ENCODE measurements at regions of chr14 and their contacts with region 1.

Region 1: GRCh38 chr14:21367582-21368144 is 16.2 kb downstream of the SUPT16H start:
- DNase-seq: no peak
- ATAC-seq: no peak
- H3K4me3 ChIP-seq: no peak overlapping the region
- H3K27ac ChIP-seq: no peak overlapping the region
- H3K4me1 ChIP-seq: no peaks in the 10 kb centered on the region
- H3K27me3 ChIP-seq: no peaks in the 10 kb centered on the region
- CTCF ChIP-seq: no peak

Region 2: GRCh38 chr14:21229821-21230220 is 137.8 kb before region 1 on chr14:
- intact Hi-C with region 1: no loop called
- DNase-seq: no peak
- ATAC-seq: peak in 1 of 4 donors; percentile 8
- H3K4me3 ChIP-seq: no peak overlapping the region
- H3K27ac ChIP-seq: no peak overlapping the region
- H3K4me1 ChIP-seq: peaks cover 0 to 32% (median 6%) of the 10 kb centered on the region in 3 donors
- H3K27me3 ChIP-seq: no peaks in the 10 kb centered on the region
- CTCF ChIP-seq: no peak

Region 3: GRCh38 chr14:21414137-21414631 is 46.5 kb after region 1 on chr14:
- intact Hi-C with region 1: loop called in 1 of 3 experiments (anchors 10 kb)
- DNase-seq: no peak
- ATAC-seq: no peak
- H3K4me3 ChIP-seq: no peak overlapping the region
- H3K27ac ChIP-seq: no peak overlapping the region
- H3K4me1 ChIP-seq: no peaks in the 10 kb centered on the region
- H3K27me3 ChIP-seq: no peaks in the 10 kb centered on the region
- CTCF ChIP-seq: no peak

Region 4: DNA sequence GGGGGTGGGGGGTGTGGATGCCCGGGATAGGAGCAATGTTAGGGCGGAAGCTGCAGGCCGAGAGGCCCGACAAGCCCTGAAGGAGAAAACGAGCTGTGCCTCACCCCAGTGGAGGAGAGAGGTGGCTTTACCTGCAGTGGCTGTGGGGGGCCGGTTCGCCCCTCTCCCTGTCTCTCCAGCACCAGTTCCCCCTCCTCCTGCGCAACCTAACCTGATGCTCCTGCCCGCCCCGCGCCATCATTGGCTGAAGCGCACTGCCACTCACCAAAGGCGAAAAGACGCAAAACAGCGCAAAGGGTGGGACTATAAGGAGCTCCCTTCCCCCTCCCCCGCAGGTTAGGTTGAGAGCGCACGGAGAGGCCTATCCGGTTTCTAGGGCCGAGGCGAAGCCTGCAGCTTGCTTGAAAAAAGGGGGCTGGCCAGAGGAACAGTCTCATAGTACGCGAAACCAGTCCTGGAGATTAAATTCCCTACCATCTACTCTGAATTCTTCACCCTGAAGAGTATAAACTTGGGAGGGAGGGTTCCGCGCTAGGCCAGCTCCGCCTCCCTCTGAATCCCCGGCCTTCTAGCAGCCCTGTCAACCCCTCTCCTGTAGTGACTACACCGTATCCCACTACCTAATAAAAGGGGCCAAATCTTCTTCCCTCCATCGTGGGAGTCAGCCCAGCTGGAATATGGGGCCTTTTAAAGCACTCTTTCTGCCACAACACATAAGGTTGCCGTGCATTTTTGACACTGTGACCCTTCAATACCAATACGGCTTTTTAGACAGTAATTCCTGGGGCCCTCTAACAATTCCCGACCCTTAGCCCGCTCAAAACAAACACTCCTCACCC is 69.6 kb after region 1 on chr14:
- intact Hi-C with region 1: no loop called
- DNase-seq: peak; percentile 92 to 100 (median 98)
- ATAC-seq: peak; percentile 100
- H3K4me3 ChIP-seq: peak overlapping the region; percentile 58 to 94 (median 72)
- H3K27ac ChIP-seq: peak overlapping the region; percentile 65 to 89 (median 76)
- H3K4me1 ChIP-seq: peaks cover 4 to 8% (median 7%) of the 10 kb centered on the region in 3 donors
- H3K27me3 ChIP-seq: no peaks in the 10 kb centered on the region
- CTCF ChIP-seq: no peak

Region 5: GRCh38 chr14:21486640-21487087 is 119.0 kb after region 1 on chr14:
- intact Hi-C with region 1: no loop called
- DNase-seq: no peak
- ATAC-seq: no peak
- H3K4me3 ChIP-seq: no peak overlapping the region
- H3K27ac ChIP-seq: no peak overlapping the region
- H3K4me1 ChIP-seq: no peaks in the 10 kb centered on the region
- H3K27me3 ChIP-seq: no peaks in the 10 kb centered on the region
- CTCF ChIP-seq: no peak

Measured in pancreas (tissue), 10 donors.